ENCODE measurements at regions of chr12 and their contacts with region 1.

Region 1: DNA sequence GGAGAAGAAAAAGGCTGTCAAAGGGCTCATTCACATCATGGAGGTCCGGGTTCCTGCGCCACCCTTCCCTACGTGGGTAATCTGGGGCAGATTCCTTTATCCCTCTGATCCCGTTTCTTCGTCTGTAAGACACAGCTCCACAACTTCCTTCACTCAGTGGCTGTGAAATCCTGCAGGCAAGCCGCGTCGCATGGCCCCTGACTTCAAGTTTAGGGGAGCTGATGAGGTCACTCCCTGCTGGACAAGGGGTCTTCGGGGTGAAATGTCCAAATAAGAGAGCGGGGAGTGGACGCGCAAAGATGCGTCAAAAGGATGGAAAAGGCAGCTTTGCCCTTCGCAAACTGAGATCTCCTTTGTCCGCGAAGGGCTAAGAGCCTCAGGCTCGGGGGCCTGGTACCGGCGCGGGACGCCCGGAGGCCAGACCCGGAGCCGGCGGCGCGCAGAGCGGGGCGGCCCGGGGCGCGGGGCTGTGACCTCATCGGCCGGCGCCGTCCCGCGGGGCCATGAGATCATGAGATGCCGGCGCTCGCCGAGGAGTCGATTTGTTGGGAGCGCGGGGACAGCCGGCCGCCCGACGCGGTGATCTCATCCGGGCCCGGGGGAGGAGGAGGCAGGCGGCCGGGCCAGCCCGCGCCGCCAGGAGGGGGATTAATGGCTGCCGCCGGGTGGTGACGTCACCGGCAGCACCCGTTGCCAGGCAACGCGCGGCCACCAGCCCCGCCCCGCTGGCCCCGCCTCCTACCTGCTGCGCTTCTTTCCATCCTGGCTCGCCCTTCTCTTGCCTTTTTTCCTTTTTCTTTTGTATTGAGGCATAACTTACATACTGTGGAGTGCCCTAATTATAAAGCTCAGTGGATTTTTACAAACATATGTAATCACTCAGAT is 62.1 kb downstream of the HRK start:
- DNase-seq: peak; percentile 88
- ATAC-seq: peak; percentile 85
- H3K4me3 Mint-ChIP-seq: peak overlapping the region; percentile 94
- H3K27ac Mint-ChIP-seq: peak overlapping the region; percentile 93
- H3K4me1 Mint-ChIP-seq: peaks cover 56% of the 10 kb centered on the region
- H3K27me3 Mint-ChIP-seq: no peaks in the 10 kb centered on the region
- CTCF ChIP-seq: no peak

Region 2: DNA sequence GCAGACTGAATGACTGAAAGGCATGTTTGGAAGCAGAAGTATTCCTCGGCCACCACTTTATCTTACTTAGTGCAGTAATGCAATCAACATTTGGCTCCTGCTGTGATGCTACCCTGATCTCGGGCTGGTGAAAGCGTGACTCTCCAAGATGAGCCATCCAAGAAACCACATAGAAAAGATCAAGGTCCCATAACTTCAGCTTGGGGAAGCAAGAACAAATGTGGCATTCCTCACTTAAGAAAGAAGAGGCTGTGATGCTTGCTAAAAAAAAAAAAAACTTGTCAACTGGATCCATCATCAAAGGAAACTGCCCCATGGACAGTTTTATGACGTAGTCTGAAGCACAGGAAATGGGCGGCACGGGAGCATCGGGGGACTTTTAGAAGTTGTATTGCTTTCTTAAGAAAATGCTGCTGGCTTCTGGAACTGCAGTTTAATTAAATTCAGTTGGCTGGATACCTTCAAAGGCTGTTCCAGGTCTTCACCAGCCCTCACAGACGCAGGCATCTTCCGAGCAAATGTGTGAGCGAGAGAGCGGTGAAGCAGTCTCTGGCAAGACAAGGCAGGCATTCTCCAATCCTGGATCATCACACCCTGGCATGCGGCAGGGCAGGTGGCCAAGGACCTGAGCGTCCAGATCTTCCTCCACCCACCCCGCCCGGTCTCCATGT is 298.3 kb before region 1 on chr12:
- CTCF ChIA-PET with region 1: no interaction called
- POLR2A ChIA-PET with region 1: no interaction called
- intact Hi-C with region 1: no loop called
- DNase-seq: no peak
- ATAC-seq: no peak
- H3K4me3 Mint-ChIP-seq: no peak overlapping the region
- H3K27ac Mint-ChIP-seq: no peak overlapping the region
- H3K4me1 Mint-ChIP-seq: peaks cover 6% of the 10 kb centered on the region
- H3K27me3 Mint-ChIP-seq: no peaks in the 10 kb centered on the region
- CTCF ChIP-seq: no peak

Region 3: GRCh38 chr12:116803013-116803736 is 16.0 kb before region 1 on chr12:
- CTCF ChIA-PET with region 1: no interaction called
- POLR2A ChIA-PET with region 1: interaction called, 12 read pairs
- intact Hi-C with region 1: loop called (anchors 1 kb)
- DNase-seq: no peak
- ATAC-seq: peak; percentile 81
- H3K4me3 Mint-ChIP-seq: peak overlapping the region; percentile 21
- H3K27ac Mint-ChIP-seq: peak overlapping the region; percentile 79
- H3K4me1 Mint-ChIP-seq: peaks cover 56% of the 10 kb centered on the region
- H3K27me3 Mint-ChIP-seq: no peaks in the 10 kb centered on the region
- CTCF ChIP-seq: no peak

Region 4: GRCh38 chr12:116861320-116861719 is 42.1 kb after region 1 on chr12:
- CTCF ChIA-PET with region 1: no interaction called
- POLR2A ChIA-PET with region 1: no interaction called
- intact Hi-C with region 1: loop called (anchors 1 kb)
- DNase-seq: peak; percentile 44
- ATAC-seq: peak; percentile 72
- H3K4me3 Mint-ChIP-seq: peak overlapping the region; percentile 47
- H3K27ac Mint-ChIP-seq: peak overlapping the region; percentile 81
- H3K4me1 Mint-ChIP-seq: peaks cover 74% of the 10 kb centered on the region
- H3K27me3 Mint-ChIP-seq: no peaks in the 10 kb centered on the region
- CTCF ChIP-seq: no peak

Region 5: DNA sequence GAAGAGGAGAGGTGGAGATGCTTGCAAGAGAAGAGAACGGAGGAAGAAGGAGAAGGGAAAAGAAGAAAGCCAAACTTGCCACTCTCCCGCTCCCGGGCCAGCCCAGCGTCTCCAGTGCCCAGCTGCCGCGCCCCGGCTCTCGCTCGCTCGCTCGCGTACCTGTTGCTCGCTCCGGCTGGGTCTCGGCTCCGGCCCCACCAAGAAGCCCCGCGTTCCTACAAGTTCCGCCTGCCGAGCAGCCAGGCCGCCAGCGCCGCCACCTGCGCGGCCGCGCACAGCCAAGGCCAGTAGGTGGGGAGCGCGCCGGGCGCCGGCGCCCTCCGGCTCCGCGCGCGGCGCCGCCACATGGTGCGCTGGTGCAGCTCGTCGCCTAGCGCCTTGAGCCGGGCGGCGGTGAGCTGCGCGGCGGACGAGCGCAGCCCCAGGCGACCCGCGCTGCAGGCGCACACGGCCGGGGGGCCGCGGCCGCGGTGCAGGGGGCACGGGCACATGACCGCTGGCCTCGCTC is 61.7 kb after region 1 on chr12:
- CTCF ChIA-PET with region 1: interaction called, 4 read pairs
- POLR2A ChIA-PET with region 1: interaction called, 4 read pairs
- intact Hi-C with region 1: loop called (anchors 2 kb)
- DNase-seq: peak; percentile 53
- ATAC-seq: peak; percentile 80
- H3K4me3 Mint-ChIP-seq: peak overlapping the region; percentile 85
- H3K27ac Mint-ChIP-seq: peak overlapping the region; percentile 77
- H3K4me1 Mint-ChIP-seq: peaks cover 45% of the 10 kb centered on the region
- H3K27me3 Mint-ChIP-seq: peaks cover 35% of the 10 kb centered on the region
- CTCF ChIP-seq: no peak

Region 6: DNA sequence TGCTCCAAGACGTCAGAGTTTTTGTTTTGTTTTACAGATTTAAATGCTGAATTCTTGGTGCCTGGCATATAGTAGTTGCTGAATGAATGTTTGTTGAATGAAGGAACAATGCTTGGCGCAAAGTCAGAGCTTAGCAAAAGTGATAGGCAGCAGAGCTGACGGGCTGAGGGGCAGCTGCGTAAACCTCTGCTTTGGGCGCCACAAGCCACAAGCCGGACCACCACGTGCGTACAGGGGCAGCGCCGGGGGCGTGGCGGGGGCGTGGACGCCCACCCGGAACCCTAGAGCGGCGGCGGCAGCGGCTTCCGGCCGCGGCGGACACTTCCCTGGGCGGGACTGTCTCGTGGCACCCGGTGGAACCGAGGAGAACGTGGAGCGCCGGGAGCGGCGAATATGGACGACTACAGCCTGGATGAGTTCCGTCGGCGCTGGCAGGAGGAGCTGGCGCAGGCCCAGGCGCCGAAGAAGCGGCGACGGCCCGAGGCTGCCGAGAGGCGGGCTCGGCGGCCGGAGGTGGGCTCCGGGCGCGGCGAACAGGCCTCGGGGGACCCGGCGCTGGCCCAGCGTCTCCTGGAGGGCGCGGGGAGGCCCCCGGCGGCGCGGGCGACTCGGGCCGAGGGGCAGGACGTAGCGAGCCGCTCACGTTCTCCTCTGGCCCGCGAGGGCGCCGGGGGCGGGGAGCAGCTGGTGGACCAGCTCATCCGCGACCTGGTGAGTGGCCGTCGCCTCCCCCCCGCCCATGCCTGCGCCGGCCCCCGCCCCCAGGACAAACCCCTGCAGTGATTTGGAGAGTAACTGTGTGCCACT is 91.7 kb after region 1 on chr12 and contains the start of gene FBXW8:
- CTCF ChIA-PET with region 1: no interaction called
- POLR2A ChIA-PET with region 1: interaction called, 5 read pairs
- intact Hi-C with region 1: loop called (anchors 1 kb)
- DNase-seq: peak; percentile 72
- ATAC-seq: peak; percentile 96
- H3K4me3 Mint-ChIP-seq: peak within 1 kb of the TSS; percentile 85
- H3K27ac Mint-ChIP-seq: peak within 1 kb of the TSS; percentile 65
- H3K4me1 Mint-ChIP-seq: peaks cover 33% of the 10 kb centered on the region
- H3K27me3 Mint-ChIP-seq: no peaks in the 10 kb centered on the region
- CTCF ChIP-seq: no peak
- total RNA-seq, gene FBXW8: 16.1 and 17.6 TPM in 2 replicates

Region 7: DNA sequence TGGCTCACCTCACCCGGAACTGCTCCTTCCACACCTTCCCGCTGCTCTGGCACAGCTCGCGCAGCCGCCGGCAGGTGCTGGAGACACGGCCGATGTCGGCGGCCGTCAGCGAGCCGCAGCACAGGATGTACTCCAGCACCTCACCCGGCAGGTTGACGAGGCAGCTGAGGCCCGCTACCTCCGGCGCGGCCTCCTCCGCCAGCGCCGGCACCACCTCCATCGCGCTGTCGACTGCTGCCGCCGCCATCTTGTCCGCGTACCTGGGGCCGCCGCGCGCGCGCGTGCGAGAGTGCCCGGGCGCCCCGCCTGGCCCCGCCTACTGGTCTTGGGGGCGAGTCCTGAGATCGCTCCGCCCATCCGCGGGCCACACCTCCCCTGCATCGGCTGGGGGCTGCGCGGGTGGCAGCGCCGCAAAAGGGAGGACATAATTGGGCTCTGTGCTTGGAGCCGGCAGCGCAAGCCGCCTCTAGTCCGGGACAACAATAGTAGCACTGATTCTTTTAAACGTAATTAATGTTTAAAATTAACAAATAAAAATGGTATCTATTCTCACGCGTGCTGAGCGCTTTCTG is 371.1 kb after region 1 on chr12 and contains the start of gene FBXO21:
- CTCF ChIA-PET with region 1: no interaction called
- POLR2A ChIA-PET with region 1: interaction called, 5 read pairs
- intact Hi-C with region 1: loop called (anchors 5 kb)
- DNase-seq: peak; percentile 96
- ATAC-seq: peak; percentile 96
- H3K4me3 Mint-ChIP-seq: peak within 1 kb of the TSS; percentile 93
- H3K27ac Mint-ChIP-seq: peak within 1 kb of the TSS; percentile 90
- H3K4me1 Mint-ChIP-seq: peaks cover 29% of the 10 kb centered on the region
- H3K27me3 Mint-ChIP-seq: no peaks in the 10 kb centered on the region
- CTCF ChIP-seq: no peak
- total RNA-seq, gene FBXO21: 35.9 and 41.5 TPM in 2 replicates

Measured in activated B cell treated with CpG ODN at 0.5 μM for 24 hours (primary cell).